GM12878 (cell line): ENCODE measurements at regions of chr5 and their contacts with region 1.

Region 1: DNA sequence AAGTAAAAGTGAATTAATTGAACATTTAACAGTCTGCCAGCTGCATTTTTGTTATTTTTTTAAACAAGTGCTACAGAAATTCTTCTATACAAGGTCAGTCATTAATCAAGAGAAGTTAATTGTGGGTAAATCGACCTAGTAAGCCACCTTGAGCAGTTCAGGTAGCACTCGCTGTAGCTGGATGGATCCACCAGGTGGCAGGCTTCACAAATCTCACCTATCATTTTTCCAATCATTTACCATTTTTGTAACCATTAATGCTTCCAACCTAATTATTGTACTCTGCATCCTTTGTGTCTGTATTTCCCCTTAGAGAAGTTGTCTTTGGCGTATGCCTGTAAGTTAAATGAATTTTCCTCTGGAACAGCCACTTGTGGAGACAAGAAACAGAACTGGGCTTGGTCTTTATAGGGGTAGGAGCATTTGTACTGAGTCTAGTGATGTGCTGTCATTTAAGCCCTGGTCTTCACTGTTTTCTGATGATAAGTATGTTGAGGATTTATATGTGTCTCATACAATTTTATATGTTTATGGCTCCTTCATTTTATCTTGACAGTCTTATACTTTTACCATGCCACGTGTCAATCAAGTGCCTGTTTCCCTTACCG is 39.5 kb downstream of the CD180 start:
- DNase-seq: no peak
- ATAC-seq: peak; percentile 85
- H3K4me3 ChIP-seq: no peak overlapping the region
- H3K27ac ChIP-seq: no peak overlapping the region
- H3K4me1 ChIP-seq: peaks cover 4% of the 10 kb centered on the region; the same call in 1 of the 2 replicates
- H3K27me3 ChIP-seq: no peaks in the 10 kb centered on the region; a peak in 2 of 4 replicates
- CTCF ChIP-seq: peak; percentile 74 to 80 (median 79)
- EP300 ChIP-seq: no peak
- POLR2A ChIP-seq: no peak
- RAD21 ChIP-seq: peak; percentile 60

Region 2: DNA sequence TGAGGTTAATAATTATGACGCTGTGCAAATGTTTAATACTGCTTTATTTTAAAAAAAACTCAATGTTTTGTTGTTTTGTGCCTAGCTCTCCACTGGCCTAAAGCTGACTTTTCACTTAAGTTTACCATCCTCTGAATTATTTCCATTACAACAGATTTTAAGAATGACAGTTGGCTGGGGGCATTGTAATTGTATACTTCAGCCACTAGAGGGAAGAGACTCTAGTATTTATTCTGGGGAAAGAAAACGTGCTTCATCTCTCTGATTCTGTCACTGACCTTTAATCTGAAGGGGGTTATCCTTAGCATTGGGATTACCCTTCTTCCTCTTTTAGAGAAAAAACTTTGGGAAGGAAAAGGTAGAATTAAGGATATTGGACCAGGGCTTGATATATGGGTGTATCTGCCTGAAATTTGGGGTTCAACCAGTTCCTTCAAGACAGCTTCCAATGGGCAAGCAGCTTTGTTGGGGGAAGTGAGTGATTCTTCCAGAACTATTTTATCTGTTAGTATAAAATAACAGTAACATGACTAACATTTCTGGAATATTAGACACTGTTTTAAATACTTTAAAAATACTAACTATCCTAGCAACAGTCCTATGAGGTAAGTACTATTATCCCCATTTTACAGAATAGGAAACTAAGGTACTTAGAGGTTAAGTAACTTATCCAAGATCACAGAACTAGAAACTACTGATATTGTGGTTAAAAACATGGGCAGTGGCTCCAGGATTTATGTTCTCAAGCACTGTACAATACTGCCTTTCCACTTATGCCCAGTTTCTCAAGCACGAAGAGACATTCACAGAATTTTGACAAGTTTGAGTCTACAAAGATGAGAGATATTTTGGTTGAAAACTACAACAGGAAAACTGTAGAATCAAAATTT is 168.9 kb before region 1 on chr5:
- CTCF ChIA-PET with region 1: interaction called, 4 read pairs
- POLR2A ChIA-PET with region 1: no interaction called
- RAD21 ChIA-PET with region 1: interaction called, 3 read pairs
- SMC1A ChIA-PET with region 1: no interaction called
- in situ Hi-C with region 1: no loop called
- intact Hi-C with region 1: loop called (anchors 10 kb)
- DNase-seq: no peak
- ATAC-seq: peak; percentile 66
- H3K4me3 ChIP-seq: no peak overlapping the region
- H3K27ac ChIP-seq: no peak overlapping the region
- H3K4me1 ChIP-seq: no peaks in the 10 kb centered on the region; the same call in 1 of the 2 replicates
- H3K27me3 ChIP-seq: no peaks in the 10 kb centered on the region; a peak in 1 of 4 replicates
- CTCF ChIP-seq: peak; percentile 47 to 80 (median 71)
- EP300 ChIP-seq: no peak
- POLR2A ChIP-seq: no peak
- RAD21 ChIP-seq: peak; percentile 49

Region 3: GRCh38 chr5:67106626-67107342 is 50.3 kb before region 1 on chr5:
- CTCF ChIA-PET with region 1: no interaction called
- POLR2A ChIA-PET with region 1: no interaction called
- RAD21 ChIA-PET with region 1: no interaction called
- SMC1A ChIA-PET with region 1: no interaction called
- in situ Hi-C with region 1: no loop called
- intact Hi-C with region 1: no loop called
- DNase-seq: no peak
- ATAC-seq: no peak
- H3K4me3 ChIP-seq: no peak overlapping the region
- H3K27ac ChIP-seq: no peak overlapping the region
- H3K4me1 ChIP-seq: no peaks in the 10 kb centered on the region
- H3K27me3 ChIP-seq: peaks cover 0 to 2% of the 10 kb centered on the region in 2 experiments; a peak in 1 of 4 replicates
- CTCF ChIP-seq: no peak
- EP300 ChIP-seq: no peak
- POLR2A ChIP-seq: no peak
- RAD21 ChIP-seq: no peak

Region 4: GRCh38 chr5:67202828-67203227 is 45.7 kb after region 1 on chr5:
- CTCF ChIA-PET with region 1: interaction called, 131 read pairs
- POLR2A ChIA-PET with region 1: interaction called, 3 read pairs
- RAD21 ChIA-PET with region 1: interaction called, 31 read pairs
- SMC1A ChIA-PET with region 1: interaction called, 24 read pairs
- in situ Hi-C with region 1: no loop called
- intact Hi-C with region 1: no loop called
- DNase-seq: no peak
- ATAC-seq: no peak
- H3K4me3 ChIP-seq: no peak overlapping the region
- H3K27ac ChIP-seq: peak overlapping the region; percentile 35; the same call in 1 of the 2 replicates
- H3K4me1 ChIP-seq: peaks cover 80% of the 10 kb centered on the region
- H3K27me3 ChIP-seq: no peaks in the 10 kb centered on the region
- CTCF ChIP-seq: no peak
- EP300 ChIP-seq: no peak
- POLR2A ChIP-seq: no peak
- RAD21 ChIP-seq: no peak

Region 5: DNA sequence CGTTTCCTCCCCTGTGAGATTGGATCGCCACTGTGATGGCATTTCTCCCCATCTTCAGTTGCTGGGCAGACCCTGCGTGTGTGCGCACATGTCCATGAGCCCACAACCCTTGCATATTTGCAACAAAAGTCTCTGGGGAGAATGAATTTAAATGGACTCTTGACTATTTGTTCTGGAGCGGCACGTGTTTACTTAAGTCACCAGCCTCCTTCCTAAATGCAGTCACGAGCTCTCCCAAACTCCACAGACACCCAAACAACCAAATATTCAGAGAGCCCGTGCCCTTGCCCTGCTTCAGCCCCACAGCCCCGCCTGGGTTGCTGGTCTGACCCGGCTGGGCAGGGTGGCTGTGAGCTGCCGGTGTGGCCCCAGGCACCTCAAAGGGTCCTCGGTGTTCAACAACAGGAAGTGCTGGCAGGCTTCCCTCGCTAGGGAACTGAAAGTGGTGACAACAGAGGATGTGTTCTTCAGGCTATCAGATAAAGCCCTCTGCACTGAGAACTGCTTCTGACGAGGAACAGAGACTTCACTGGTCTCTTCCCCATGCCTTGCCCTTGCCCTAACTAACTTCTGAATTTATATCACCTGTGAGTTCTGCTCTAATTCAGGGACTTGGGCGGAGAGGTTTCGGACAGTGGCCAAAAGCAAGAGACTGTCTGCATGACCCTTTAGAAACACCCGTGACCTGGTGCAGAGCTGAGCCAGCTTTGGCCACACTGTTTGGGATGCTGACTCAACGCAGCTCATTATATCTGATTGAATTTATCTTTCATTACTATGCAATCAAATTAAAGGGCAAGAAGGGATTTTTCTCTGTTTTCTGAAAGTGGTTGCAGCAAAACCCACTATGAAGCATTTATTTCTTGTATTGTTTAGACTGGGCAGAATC is 58.7 kb after region 1 on chr5:
- CTCF ChIA-PET with region 1: interaction called, 131 read pairs
- POLR2A ChIA-PET with region 1: interaction called, 3 read pairs
- RAD21 ChIA-PET with region 1: no interaction called
- SMC1A ChIA-PET with region 1: no interaction called
- in situ Hi-C with region 1: loop called (anchors 5 kb)
- intact Hi-C with region 1: no loop called
- DNase-seq: peak; percentile 79
- ATAC-seq: peak; percentile 99
- H3K4me3 ChIP-seq: peak overlapping the region; percentile 37; the same call in 1 of the 2 replicates
- H3K27ac ChIP-seq: peak overlapping the region; percentile 45; the same call in 1 of the 2 replicates
- H3K4me1 ChIP-seq: peaks cover 14% of the 10 kb centered on the region
- H3K27me3 ChIP-seq: no peaks in the 10 kb centered on the region
- CTCF ChIP-seq: no peak
- EP300 ChIP-seq: peak in 1 of 2 experiments; percentile 67; a peak in 1 of 4 replicates
- POLR2A ChIP-seq: peak; percentile 54; the same call in 1 of the 2 replicates
- RAD21 ChIP-seq: no peak

Region 6: DNA sequence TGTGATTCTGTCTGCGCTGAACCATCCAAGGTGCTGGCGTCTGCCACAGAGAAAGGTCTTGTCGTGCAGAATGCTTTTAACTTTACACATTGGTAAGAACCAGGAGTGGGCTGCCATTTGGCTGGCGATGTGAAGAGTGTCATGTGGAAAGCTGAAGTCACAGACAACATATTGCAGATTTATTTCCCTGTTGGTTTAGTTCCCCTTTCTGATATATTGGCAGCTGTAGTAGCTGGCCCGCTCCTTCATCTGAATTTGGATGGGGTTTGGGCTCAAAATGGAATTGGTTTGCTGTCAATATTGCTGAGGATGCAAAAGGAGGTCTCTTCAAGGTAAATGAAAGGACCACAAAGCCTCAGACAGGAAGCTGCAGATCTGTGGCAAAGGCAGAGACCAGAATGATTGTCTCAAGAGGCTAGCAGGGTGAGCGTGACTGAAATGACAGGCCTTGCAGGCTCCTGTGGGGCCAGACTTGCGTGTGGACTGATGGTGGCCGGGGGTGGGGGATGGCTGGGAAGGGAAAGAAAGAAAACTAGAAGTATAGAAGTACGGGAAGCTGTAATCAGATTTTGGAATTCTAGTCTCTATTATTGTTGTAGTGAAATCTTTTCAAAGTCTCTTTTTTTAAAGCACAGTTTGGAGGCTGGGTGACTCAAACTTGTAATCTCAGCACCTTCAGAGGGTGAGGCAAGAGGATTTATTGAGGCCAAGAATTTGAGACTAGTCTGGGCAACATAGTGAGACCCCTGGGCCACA is 64.6 kb after region 1 on chr5:
- CTCF ChIA-PET with region 1: interaction called, 10 read pairs
- POLR2A ChIA-PET with region 1: interaction called, 3 read pairs
- RAD21 ChIA-PET with region 1: interaction called, 3 read pairs
- SMC1A ChIA-PET with region 1: no interaction called
- in situ Hi-C with region 1: no loop called
- intact Hi-C with region 1: no loop called
- DNase-seq: no peak
- ATAC-seq: peak; percentile 94
- H3K4me3 ChIP-seq: no peak overlapping the region
- H3K27ac ChIP-seq: peak overlapping the region; percentile 18; the same call in 1 of the 2 replicates
- H3K4me1 ChIP-seq: peaks cover 16% of the 10 kb centered on the region
- H3K27me3 ChIP-seq: no peaks in the 10 kb centered on the region
- CTCF ChIP-seq: no peak
- EP300 ChIP-seq: peak in 1 of 2 experiments; percentile 43; a peak in 1 of 4 replicates
- POLR2A ChIP-seq: no peak
- RAD21 ChIP-seq: no peak